WTC11 (cell line): ENCODE measurements at regions of chr12 and their contacts with region 1.

Region 1: GRCh38 chr12:51863933-51864832 is 15.7 kb upstream of the FIGNL2 start:
- DNase-seq: peak; percentile 88
- ATAC-seq: peak; percentile 86
- H3K4me3 Mint-ChIP-seq: peak overlapping the region; percentile 80
- H3K27ac Mint-ChIP-seq: no peak overlapping the region
- H3K4me1 Mint-ChIP-seq: peaks cover 52% of the 10 kb centered on the region
- H3K27me3 Mint-ChIP-seq: peaks cover 65% of the 10 kb centered on the region
- CTCF ChIP-seq: no peak

Region 2: GRCh38 chr12:51846911-51847642 is 17.1 kb before region 1 on chr12:
- CTCF ChIA-PET with region 1: interaction called, 24 read pairs
- POLR2A ChIA-PET with region 1: interaction called, 4 read pairs
- DNase-seq: peak; percentile 64
- ATAC-seq: peak; percentile 41
- H3K4me3 Mint-ChIP-seq: peak overlapping the region; percentile 75
- H3K27ac Mint-ChIP-seq: no peak overlapping the region
- H3K4me1 Mint-ChIP-seq: peaks cover 39% of the 10 kb centered on the region
- H3K27me3 Mint-ChIP-seq: peaks cover 52% of the 10 kb centered on the region
- CTCF ChIP-seq: no peak

Region 3: GRCh38 chr12:51886021-51886322 is 21.8 kb after region 1 on chr12:
- CTCF ChIA-PET with region 1: interaction called, 11 read pairs
- POLR2A ChIA-PET with region 1: interaction called, 4 read pairs
- DNase-seq: no peak
- ATAC-seq: no peak
- H3K4me3 Mint-ChIP-seq: no peak overlapping the region
- H3K27ac Mint-ChIP-seq: no peak overlapping the region
- H3K4me1 Mint-ChIP-seq: peaks cover 25% of the 10 kb centered on the region
- H3K27me3 Mint-ChIP-seq: peaks cover 16% of the 10 kb centered on the region
- CTCF ChIP-seq: no peak

Region 4: GRCh38 chr12:51891843-51892242 is 27.7 kb after region 1 on chr12:
- CTCF ChIA-PET with region 1: interaction called, 11 read pairs
- POLR2A ChIA-PET with region 1: interaction called, 4 read pairs
- DNase-seq: no peak
- ATAC-seq: no peak
- H3K4me3 Mint-ChIP-seq: no peak overlapping the region
- H3K27ac Mint-ChIP-seq: no peak overlapping the region
- H3K4me1 Mint-ChIP-seq: peaks cover 22% of the 10 kb centered on the region
- H3K27me3 Mint-ChIP-seq: peaks cover 14% of the 10 kb centered on the region
- CTCF ChIP-seq: no peak